ENCODE measurements at regions of chr9 and their contacts with region 1.

Region 1: GRCh38 chr9:95793924-95794828 is 81.3 kb upstream of the ERCC6L2 start:
- DNase-seq: peak; percentile 97
- H3K4me3 ChIP-seq: no peak overlapping the region
- H3K27ac ChIP-seq: peak overlapping the region; percentile 92
- H3K4me1 ChIP-seq: peaks cover 22% of the 10 kb centered on the region
- H3K27me3 ChIP-seq: no peaks in the 10 kb centered on the region
- CTCF ChIP-seq: no peak
- POLR2A ChIP-seq: peak; percentile 54

Region 2: DNA sequence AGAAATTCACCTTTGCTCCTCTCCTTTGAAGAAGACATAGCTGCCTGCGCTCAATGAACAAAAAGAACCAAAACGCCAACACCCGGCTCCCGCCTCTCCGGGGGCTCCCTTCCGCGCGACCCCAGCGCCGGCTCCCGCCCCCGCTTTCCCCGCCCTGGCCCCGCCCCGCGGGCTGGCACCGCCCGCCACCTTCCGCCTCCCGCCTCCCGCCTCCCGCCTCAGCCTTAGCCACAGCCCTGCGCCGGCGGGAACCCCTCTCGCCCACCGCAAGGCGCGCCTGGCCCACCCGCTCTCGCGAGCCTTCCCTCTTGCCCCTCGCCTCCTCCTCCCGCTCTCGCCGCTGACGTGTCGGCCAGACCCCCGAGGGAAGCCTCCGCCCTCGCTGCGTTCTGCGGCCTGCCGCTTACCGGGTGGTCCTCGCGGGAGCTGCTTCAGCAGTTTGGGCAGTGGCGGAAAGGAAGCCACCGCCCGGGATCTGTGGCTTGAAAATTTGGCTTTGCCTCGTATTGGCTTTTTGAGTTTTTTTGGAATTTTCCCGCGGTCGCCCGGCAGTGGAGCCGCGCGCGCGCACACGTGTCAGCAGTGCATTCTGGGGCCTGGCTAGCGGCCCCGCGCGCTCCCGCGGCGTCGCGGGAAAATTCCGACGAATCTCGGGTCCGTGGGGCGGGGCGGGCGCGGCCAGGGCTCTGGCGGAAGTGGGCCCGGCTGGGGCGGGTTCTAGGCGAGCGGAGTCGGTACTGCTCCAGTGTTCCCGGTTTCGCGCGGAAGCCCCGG is 476.9 kb before region 1 on chr9 and contains the start of gene FANCC:
- CTCF ChIA-PET with region 1: no interaction called
- POLR2A ChIA-PET with region 1: no interaction called
- dilution Hi-C with region 1: no loop called
- intact Hi-C with region 1: loop called (anchors 5 kb)
- DNase-seq: peak; percentile 89
- H3K4me3 ChIP-seq: peak within 1 kb of the TSS; percentile 76 to 96 (median 88)
- H3K27ac ChIP-seq: peak within 1 kb of the TSS; percentile 98
- H3K4me1 ChIP-seq: peaks cover 14% of the 10 kb centered on the region
- H3K27me3 ChIP-seq: peaks cover 0 to 5% of the 10 kb centered on the region in 2 experiments
- CTCF ChIP-seq: no peak
- POLR2A ChIP-seq: peak; percentile 72
- total RNA-seq, gene FANCC: 13.1 and 14.0 TPM in 2 replicates

Region 3: DNA sequence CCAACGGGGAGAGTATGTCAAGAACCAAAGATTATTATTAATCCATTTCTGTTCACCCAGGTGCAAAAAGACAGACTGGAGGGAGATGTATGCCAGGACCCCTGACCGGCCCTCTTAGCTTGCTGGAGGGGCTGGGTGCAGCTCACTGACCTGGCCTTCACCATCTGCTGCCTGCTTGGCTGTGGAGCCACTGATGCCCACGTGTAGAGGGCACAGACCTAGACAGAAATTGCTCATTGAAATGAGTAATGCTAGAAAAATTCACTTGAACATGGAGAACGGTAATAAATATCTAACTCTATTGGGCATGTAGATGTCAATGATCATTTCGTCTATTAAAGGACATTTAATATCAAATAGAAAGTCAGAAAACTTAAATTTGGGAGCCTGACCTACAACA is 22.5 kb after region 1 on chr9:
- CTCF ChIA-PET with region 1: interaction called, 3 read pairs
- POLR2A ChIA-PET with region 1: no interaction called
- dilution Hi-C with region 1: no loop called
- intact Hi-C with region 1: loop called (anchors 1 kb)
- DNase-seq: no peak
- H3K4me3 ChIP-seq: no peak overlapping the region
- H3K27ac ChIP-seq: no peak overlapping the region
- H3K4me1 ChIP-seq: peaks cover 10% of the 10 kb centered on the region
- H3K27me3 ChIP-seq: no peaks in the 10 kb centered on the region
- CTCF ChIP-seq: no peak
- POLR2A ChIP-seq: no peak

Region 4: DNA sequence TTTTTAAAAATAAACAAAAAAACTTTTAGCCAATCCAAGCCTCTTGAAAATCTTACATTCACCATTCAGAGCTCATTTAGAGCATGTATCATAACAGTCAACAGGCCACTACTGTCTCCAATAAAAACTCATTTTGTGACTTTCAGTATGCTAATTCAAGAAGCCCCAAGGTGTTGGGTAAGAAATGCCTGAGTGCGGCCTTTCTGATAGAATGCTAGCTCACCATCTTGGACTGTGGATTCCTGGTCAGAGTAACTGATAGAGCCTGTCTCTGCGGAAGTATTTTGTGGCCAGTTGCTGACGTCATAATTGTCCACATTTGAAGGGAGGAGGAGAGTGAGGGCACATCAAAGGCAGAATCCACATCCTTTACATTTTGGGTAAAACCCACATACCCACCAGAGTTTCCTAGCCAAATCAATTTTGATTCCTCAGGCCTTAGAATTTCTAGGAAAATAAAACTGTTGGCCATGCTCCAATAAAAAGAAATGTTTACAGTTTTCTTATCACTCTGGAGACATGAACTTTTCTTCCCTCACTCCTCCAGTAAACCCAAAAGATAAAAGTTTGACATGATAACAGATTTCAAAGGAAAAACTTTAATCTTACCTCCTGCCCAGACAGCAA is 40.2 kb after region 1 on chr9:
- CTCF ChIA-PET with region 1: no interaction called
- POLR2A ChIA-PET with region 1: no interaction called
- dilution Hi-C with region 1: no loop called
- intact Hi-C with region 1: no loop called
- DNase-seq: no peak
- H3K4me3 ChIP-seq: no peak overlapping the region
- H3K27ac ChIP-seq: no peak overlapping the region
- H3K4me1 ChIP-seq: no peaks in the 10 kb centered on the region
- H3K27me3 ChIP-seq: no peaks in the 10 kb centered on the region
- CTCF ChIP-seq: no peak
- POLR2A ChIP-seq: no peak

Region 5: GRCh38 chr9:95864852-95865580 is 70.8 kb after region 1 on chr9:
- CTCF ChIA-PET with region 1: no interaction called
- POLR2A ChIA-PET with region 1: no interaction called
- dilution Hi-C with region 1: no loop called
- intact Hi-C with region 1: no loop called
- DNase-seq: no peak
- H3K4me3 ChIP-seq: no peak overlapping the region
- H3K27ac ChIP-seq: no peak overlapping the region
- H3K4me1 ChIP-seq: no peaks in the 10 kb centered on the region
- H3K27me3 ChIP-seq: no peaks in the 10 kb centered on the region
- CTCF ChIP-seq: no peak
- POLR2A ChIP-seq: no peak

Region 6: GRCh38 chr9:96025995-96026602 is 231.9 kb after region 1 on chr9:
- CTCF ChIA-PET with region 1: no interaction called
- POLR2A ChIA-PET with region 1: no interaction called
- dilution Hi-C with region 1: no loop called
- intact Hi-C with region 1: loop called (anchors 5 kb)
- DNase-seq: no peak
- H3K4me3 ChIP-seq: no peak overlapping the region
- H3K27ac ChIP-seq: no peak overlapping the region
- H3K4me1 ChIP-seq: peaks cover 4% of the 10 kb centered on the region
- H3K27me3 ChIP-seq: peaks cover 34 to 40% of the 10 kb centered on the region in 2 experiments
- CTCF ChIP-seq: peak; percentile 11 to 30
- POLR2A ChIP-seq: no peak

Region 7: GRCh38 chr9:96040591-96041461 is 246.7 kb after region 1 on chr9:
- CTCF ChIA-PET with region 1: no interaction called
- POLR2A ChIA-PET with region 1: no interaction called
- dilution Hi-C with region 1: no loop called
- intact Hi-C with region 1: no loop called
- DNase-seq: no peak
- H3K4me3 ChIP-seq: no peak overlapping the region
- H3K27ac ChIP-seq: no peak overlapping the region
- H3K4me1 ChIP-seq: no peaks in the 10 kb centered on the region
- H3K27me3 ChIP-seq: no peaks in the 10 kb centered on the region
- CTCF ChIP-seq: no peak
- POLR2A ChIP-seq: no peak